ENCODE measurements at regions of chr11 and their contacts with region 1.

Region 1: DNA sequence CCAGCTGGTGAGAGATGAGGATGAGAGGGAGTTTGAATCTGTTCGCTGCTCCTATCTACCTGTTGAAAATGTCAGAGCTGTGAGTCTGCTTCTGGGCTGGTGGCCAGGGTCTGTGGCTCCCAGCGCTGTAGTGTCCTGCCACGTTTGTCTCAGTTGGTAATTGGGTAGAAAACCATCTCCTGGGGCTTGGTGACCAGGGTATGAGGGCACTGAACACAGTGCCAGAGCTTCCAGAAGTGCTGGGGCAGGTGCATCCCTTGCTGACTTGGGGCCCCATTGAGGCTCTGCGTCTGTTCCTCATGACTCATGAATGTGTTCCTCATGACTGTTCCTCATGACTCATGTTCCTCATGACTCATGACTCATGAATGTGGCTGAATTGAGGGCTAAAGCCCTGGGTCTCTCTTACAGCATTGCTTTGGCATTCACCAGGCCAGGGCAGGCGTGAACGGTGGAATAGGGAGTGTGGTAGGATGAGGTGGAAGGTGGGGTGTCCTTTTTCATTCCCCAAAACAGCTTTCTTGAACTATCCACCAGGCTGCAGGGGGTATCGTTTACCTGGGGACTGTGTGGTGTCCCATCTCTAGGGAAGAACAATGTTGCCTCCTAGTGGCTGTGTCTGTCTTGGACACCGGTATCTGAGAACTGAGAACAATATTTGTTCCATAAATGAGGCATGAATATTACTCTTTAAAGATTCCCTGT is 139.5 kb downstream of the COMMD9 start:
- DNase-seq: peak; percentile 100
- H3K4me3 ChIP-seq: no peak overlapping the region
- H3K27ac ChIP-seq: peak overlapping the region; percentile 67
- H3K4me1 ChIP-seq: peaks cover 43% of the 10 kb centered on the region
- H3K27me3 ChIP-seq: no peaks in the 10 kb centered on the region
- CTCF ChIP-seq: peak; percentile 63 to 76

Region 2: GRCh38 chr11:35485656-35486322 is 663.9 kb before region 1 on chr11:
- CTCF ChIA-PET with region 1: no interaction called
- dilution Hi-C with region 1: no loop called
- in situ Hi-C with region 1: no loop called
- intact Hi-C with region 1: loop called (anchors 10 kb)
- DNase-seq: peak; percentile 58
- H3K4me3 ChIP-seq: no peak overlapping the region
- H3K27ac ChIP-seq: no peak overlapping the region
- H3K4me1 ChIP-seq: no peaks in the 10 kb centered on the region
- H3K27me3 ChIP-seq: no peaks in the 10 kb centered on the region
- CTCF ChIP-seq: peak; percentile 93 to 94

Region 3: DNA sequence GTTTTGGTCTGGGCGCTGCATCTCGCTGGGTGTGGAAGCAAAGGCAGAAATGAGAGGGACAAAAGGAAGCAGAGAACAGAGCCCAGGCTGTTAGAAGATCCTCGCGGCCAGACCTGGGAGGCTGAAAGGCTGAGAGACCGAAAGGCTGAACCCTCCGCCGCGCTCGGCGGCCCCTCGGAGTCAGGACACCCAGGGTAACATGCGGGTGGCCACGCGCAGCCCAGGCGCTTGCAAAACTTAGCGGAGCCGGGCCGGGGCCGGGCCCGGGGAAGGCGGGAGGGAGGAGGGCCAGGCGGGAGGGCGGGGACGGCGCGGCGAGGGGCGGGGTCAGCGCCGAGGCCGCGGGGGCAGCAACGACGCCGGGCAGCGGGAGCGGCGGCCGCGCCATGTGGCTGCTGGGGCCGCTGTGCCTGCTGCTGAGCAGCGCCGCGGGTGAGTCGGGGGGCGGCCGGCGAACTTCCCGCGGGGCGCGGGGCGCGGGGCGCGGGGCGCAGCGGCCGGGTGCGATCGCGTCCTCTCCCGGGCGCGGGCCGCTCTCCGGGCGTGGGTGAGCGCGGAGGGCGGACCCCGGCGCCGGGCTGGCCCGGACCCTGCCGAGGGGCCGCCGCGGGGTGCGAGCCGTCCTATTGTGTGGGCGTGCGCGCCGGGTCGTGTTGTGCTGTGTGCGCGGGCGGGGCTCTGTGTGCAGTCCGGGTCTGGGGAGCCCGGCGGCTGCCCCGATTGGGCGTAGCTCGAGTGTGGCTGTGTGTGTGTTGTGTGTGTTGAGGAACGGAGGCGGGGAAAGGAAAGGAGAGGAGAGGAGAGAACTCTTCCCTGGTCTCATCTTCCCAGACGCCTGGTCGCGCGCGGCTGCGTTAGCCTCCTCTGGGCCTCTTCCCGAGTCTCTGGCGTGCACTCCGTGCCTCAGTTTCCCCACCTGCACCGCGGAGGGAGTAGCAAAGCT is 205.7 kb before region 1 on chr11 and contains the start of gene LDLRAD3:
- CTCF ChIA-PET with region 1: no interaction called
- dilution Hi-C with region 1: no loop called
- in situ Hi-C with region 1: no loop called
- intact Hi-C with region 1: loop called (anchors 10 kb)
- DNase-seq: peak; percentile 76
- H3K4me3 ChIP-seq: peak within 1 kb of the TSS; percentile 77 to 93 (median 81)
- H3K27ac ChIP-seq: peak within 1 kb of the TSS; percentile 52
- H3K4me1 ChIP-seq: peaks cover 17% of the 10 kb centered on the region
- H3K27me3 ChIP-seq: no peaks in the 10 kb centered on the region
- CTCF ChIP-seq: no peak
- total RNA-seq, gene LDLRAD3: 15.3 to 18.4 TPM

Region 4: DNA sequence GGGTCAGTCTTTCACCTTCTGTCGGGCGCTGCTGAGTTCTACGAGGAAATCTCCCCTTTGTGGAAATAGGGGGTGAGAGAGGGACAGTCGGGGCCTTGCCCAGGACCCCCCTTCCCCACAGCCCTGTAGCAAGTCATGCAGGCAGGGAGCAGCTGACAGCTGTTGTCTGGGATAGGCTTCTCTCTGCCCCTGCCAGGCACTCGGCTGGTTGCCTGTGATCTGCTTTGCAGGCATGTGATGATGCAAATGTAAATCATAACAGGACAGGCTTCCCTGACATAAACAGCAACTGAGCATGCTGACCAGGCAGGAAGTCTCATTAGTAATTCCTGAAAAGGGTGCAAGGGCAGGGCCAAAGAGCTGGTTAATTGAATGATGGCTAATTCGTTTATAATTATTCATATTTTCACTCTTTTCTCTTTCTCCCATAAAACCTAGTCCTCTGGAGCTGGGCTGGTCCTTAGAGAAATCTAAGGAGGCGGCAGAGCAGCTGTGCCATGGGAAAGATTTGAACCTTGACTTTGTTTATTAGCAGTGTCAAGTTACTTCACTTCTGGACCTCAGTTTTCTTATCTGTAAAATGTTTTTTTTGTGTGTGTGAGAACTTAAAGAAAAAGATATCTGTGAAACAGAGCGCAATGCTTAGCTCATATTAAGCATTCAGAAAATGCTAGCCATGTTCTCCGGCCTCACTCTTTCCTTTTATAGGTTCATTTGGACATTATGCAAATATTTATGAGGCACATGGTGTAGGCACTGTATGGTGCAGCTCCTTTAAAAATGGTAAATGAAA is 76.1 kb before region 1 on chr11:
- CTCF ChIA-PET with region 1: interaction called, 3 read pairs
- dilution Hi-C with region 1: no loop called
- in situ Hi-C with region 1: no loop called
- intact Hi-C with region 1: loop called (anchors 2 kb)
- DNase-seq: peak; percentile 30
- H3K4me3 ChIP-seq: no peak overlapping the region
- H3K27ac ChIP-seq: no peak overlapping the region
- H3K4me1 ChIP-seq: peaks cover 18% of the 10 kb centered on the region
- H3K27me3 ChIP-seq: no peaks in the 10 kb centered on the region
- CTCF ChIP-seq: no peak

Region 5: DNA sequence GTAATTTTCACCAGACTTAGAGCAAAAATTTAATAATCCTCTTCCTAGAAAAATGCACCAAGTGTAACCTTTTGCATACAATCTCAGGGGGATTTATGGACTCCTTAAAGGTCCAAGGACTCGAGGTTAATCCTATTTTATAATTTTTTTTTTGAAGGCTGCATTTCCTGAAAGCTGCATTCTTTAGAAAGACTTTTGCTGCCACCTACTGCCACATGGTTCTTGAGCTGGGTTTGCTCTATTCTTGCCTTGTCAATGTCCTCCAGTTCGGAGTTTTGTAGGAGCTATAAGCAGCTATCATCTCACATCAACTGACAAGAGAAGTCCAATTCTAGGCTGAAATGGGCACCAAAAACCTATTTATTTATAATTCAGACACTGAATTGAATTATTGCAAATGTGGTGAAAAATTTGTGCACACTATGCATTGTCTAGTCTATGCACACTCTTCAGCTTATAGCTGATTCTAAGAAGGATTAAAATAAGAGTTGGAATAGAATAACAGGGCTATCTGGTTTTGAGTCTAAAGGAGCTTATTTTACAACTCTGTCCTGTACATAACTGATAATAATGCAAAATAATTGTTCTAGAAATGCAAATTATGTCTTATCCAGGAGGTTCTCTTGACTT is 329.1 kb after region 1 on chr11:
- CTCF ChIA-PET with region 1: no interaction called
- dilution Hi-C with region 1: no loop called
- in situ Hi-C with region 1: no loop called
- intact Hi-C with region 1: loop called (anchors 10 kb)
- DNase-seq: peak; percentile 27
- H3K4me3 ChIP-seq: no peak overlapping the region
- H3K27ac ChIP-seq: no peak overlapping the region
- H3K4me1 ChIP-seq: peaks cover 4% of the 10 kb centered on the region
- H3K27me3 ChIP-seq: no peaks in the 10 kb centered on the region
- CTCF ChIP-seq: peak; percentile 57 to 65